ENCODE measurements at regions of chr15 and their contacts with region 1.

Region 1: DNA sequence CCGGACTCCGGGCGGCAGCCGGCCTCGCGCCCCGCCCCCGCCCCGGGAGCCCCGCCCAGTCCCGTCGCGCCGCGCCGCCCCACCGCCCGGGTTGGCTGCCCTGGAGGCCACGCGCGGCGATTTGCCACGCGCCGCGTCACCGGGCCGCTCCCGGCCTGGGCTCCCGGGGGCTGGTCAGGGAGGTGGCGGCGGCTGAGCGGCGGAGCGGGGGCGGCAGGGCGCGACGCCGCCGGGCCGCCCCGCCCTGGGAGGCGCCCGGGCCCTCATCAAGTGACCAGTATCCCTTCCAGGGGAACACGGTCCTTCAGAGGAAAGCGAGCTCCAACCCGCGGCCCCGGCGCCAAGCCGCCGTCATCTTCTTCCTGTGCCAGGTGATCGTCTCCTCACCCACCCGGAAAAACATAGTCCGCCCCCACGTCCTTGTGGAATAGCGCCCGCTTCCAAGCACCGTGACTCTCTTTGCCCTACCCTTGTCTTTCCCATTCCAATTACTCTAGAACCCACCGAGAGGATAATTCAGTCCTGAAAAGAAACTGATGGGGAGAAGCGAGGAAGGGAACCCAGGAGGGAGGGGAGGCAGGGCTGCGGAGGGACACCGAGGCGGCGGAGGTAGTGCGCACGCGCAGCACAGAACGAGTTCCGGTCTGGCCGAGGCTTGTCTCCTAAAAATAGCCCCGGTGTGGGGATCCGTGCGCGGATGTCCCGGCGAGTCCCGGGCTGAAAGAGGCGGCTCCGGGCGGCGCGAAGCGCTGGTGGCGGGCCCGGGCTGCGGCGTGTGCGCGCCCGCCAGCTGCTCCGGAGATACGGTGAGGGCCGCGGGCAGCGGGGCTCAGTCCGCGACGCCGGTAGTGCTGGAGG is at the start of gene MEF2A:
- DNase-seq: peak; percentile 87 to 98 (median 92)

Region 2: DNA sequence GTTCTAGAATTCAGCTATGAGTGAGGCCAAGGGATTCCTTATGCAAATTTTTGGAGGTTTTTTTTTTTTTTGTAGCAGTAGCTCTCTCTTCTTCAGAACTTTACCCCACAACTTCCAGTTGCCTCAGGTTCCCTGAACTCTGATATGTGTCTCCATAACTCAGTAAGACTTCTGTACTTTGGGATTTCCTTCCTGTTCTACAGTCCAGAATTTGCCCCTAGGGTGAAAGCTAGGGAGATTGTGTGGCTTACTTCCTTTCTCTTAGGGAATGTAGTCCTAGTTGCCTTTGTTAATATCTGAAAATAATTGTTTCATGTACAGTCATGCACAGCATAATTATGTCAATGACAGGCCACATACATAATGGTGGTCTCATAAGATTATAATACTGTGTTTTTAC is 283.4 kb before region 1 on chr15:
- intact Hi-C with region 1: loop called (anchors 10 kb)
- DNase-seq: no peak

Region 3: DNA sequence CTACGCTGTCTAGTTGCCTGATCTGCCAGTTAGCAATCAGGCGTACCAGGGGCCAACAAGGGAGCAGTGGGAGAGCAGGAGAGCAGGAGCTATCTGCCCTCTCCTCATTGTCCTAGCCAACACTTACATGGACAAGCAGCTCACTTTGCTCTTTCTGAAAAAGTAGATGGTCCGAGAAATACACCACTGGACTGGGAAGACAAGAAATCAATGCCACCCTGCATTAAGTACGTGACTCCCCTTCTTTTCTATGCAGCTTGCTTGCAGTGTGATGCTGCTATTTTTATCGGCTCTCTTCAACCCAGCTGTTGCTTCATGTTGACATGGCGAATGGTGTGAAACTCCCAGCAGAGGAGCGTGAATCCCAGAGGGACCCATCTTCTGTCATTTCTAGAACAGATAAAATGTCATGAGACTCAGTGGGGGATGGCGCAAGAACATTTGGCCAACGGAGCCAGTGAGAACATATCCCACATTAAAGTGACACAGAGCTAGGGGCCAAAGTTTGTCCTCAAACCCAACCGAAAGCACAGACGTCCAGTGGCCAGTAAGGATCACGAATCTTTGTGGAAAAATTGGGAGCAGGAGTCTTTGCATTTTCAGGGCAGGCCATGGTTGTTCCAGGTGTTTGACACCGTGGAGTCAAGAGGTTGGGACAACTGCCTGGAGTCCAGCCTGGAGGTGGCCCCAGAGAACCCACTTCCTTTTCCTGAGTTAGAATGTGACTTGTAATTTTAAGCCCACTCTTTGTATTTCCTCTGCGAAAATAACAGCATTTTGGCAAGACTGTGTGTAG is 53.5 kb before region 1 on chr15:
- intact Hi-C with region 1: loop called (anchors 10 kb)
- DNase-seq: no peak